Ascending aorta (tissue), 2 donors: ENCODE measurements at regions of chr2 and their contacts with region 1.

Region 1: GRCh38 chr2:189661148-189661956 is at the start of gene ASNSD1:
- DNase-seq: peak; percentile 98 to 100
- H3K4me3 ChIP-seq: peak within 1 kb of the TSS; percentile 75 to 96
- H3K27ac ChIP-seq: peak within 1 kb of the TSS; percentile 81 to 85
- H3K4me1 ChIP-seq: peaks cover 4 to 33% of the 10 kb centered on the region in 2 donors
- H3K27me3 ChIP-seq: no peaks in the 10 kb centered on the region
- CTCF ChIP-seq: peak; percentile 95 to 98 (median 96)
- total RNA-seq, gene ASNSD1: 18.1 TPM

Region 2: GRCh38 chr2:189466660-189467059 is 194.7 kb before region 1 on chr2:
- intact Hi-C with region 1: loop called (anchors 10 kb)
- DNase-seq: no peak
- H3K4me3 ChIP-seq: no peak overlapping the region
- H3K27ac ChIP-seq: peak overlapping the region; percentile 62 to 65
- H3K4me1 ChIP-seq: peaks cover 0 to 21% of the 10 kb centered on the region in 2 donors
- H3K27me3 ChIP-seq: no peaks in the 10 kb centered on the region
- CTCF ChIP-seq: peak; percentile 53 to 77 (median 62)

Region 3: GRCh38 chr2:189580658-189581353 is 80.5 kb before region 1 on chr2 and contains the start of gene SLC40A1:
- intact Hi-C with region 1: loop called (anchors 5 kb)
- DNase-seq: peak; percentile 39 to 89
- H3K4me3 ChIP-seq: peak within 1 kb of the TSS; percentile 87 to 92
- H3K27ac ChIP-seq: peak within 1 kb of the TSS; percentile 90 to 94
- H3K4me1 ChIP-seq: peaks cover 0 to 22% of the 10 kb centered on the region in 2 donors
- H3K27me3 ChIP-seq: no peaks in the 10 kb centered on the region
- CTCF ChIP-seq: no peak
- total RNA-seq, gene SLC40A1: 40.8 TPM

Region 4: GRCh38 chr2:189674374-189675112 is 13.2 kb after region 1 on chr2 and contains the start of gene ANKAR:
- intact Hi-C with region 1: loop called (anchors 1 kb)
- DNase-seq: peak; percentile 40 to 95
- H3K4me3 ChIP-seq: peak within 1 kb of the TSS; percentile 71 to 79
- H3K27ac ChIP-seq: peak within 1 kb of the TSS; percentile 95 to 98
- H3K4me1 ChIP-seq: peaks cover 0 to 12% of the 10 kb centered on the region in 2 donors
- H3K27me3 ChIP-seq: no peaks in the 10 kb centered on the region
- CTCF ChIP-seq: peak; percentile 79 to 92 (median 83)
- total RNA-seq, gene ANKAR: 0.75 TPM

Region 5: DNA sequence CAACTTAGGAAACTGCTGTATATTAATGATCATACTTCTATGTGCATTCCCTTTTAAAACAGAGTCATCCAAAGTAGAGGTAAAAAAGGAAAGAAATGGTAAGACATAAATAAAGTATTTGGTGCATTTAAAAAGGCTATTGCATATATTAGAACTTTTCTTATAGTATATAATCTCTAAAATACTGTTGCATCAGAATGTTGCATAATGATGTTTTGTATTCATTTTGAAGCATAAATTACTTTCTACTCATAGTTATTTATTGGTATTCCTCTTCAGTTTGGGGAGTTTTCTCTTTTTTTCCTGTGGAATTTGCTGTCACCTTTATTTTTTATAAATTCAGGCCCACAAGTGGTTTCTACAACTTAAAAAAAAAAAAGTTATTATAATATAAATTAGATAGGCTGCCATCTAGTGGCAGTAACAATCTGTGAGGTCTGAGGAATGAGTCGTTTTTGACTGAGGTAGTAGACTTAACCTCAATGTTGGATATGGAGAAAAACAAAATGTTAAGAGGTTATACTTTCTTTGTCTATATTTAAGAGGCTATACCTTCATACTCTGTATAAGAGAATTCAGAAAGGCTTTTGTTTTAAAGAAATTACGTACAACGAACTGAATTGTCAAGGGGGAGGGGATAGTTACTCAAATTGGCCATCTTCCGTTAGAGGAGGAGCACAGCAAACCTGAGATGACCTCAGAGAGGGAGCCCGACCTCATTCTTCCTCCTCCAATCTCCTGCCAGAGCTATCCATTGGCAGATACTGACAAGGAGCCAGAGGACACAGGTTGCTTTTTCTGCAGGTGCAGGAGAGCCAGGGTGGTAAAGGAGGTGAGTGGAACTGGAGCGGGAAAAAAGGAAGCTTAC is 36.9 kb after region 1 on chr2:
- intact Hi-C with region 1: loop called (anchors 1 kb)
- DNase-seq: peak in 1 of 2 donors; percentile 70
- H3K4me3 ChIP-seq: peak overlapping the region in 1 of 2 donors; percentile 17
- H3K27ac ChIP-seq: no peak overlapping the region
- H3K4me1 ChIP-seq: no peaks in the 10 kb centered on the region
- H3K27me3 ChIP-seq: no peaks in the 10 kb centered on the region
- CTCF ChIP-seq: peak; percentile 51 to 74 (median 61)

Region 6: GRCh38 chr2:189783927-189784867 is 122.8 kb after region 1 on chr2 and contains the starts of genes ORMDL1 and PMS1:
- intact Hi-C with region 1: loop called (anchors 2 kb)
- DNase-seq: peak; percentile 73 to 97
- H3K4me3 ChIP-seq: peak within 1 kb of the TSS; percentile 81 to 91
- H3K27ac ChIP-seq: peak within 1 kb of the TSS; percentile 95 to 96
- H3K4me1 ChIP-seq: peaks cover 15 to 24% of the 10 kb centered on the region in 2 donors
- H3K27me3 ChIP-seq: no peaks in the 10 kb centered on the region
- CTCF ChIP-seq: no peak
- total RNA-seq, gene ORMDL1: 68.6 TPM
- total RNA-seq, gene PMS1: 8.7 TPM